ENCODE measurements at regions of chr11 and their contacts with region 1.

Region 1: DNA sequence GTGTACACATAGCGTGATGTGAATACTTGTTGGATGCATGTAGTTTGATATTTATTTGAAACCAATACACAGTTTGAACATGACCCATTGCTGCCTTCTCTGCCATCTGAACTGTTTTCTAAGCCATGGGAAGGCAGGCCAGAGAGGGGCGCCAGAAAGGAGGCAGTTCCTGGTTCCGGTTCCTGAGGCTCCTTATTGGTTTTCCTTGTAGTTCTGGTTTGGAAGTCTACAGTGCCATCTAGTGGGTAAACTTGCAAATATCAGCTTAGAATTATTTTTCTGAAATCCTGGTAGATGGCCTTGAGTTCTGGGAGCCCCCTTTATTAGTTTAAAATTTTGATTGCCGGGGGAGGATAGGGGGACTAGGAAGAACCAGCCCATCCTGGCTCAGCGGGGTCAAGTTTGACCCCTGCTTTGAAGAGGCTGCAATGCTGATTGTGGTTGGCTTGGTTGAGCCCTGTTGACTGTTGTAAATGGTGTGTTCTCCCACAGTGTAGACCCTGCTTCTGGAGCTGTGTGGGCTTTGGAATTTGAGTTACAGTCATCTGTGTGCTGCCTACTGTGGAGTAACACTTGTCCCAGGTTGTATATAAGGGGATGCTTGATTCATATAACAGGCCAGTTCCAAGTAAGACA is 48.4 kb downstream of the GRAMD1B start:
- DNase-seq: peak in 1 of 2 donors; percentile 22
- H3K4me3 ChIP-seq: no peak overlapping the region
- CTCF ChIP-seq: peak in 1 of 3 donors; percentile 25
- POLR2A ChIP-seq: no peak

Region 2: DNA sequence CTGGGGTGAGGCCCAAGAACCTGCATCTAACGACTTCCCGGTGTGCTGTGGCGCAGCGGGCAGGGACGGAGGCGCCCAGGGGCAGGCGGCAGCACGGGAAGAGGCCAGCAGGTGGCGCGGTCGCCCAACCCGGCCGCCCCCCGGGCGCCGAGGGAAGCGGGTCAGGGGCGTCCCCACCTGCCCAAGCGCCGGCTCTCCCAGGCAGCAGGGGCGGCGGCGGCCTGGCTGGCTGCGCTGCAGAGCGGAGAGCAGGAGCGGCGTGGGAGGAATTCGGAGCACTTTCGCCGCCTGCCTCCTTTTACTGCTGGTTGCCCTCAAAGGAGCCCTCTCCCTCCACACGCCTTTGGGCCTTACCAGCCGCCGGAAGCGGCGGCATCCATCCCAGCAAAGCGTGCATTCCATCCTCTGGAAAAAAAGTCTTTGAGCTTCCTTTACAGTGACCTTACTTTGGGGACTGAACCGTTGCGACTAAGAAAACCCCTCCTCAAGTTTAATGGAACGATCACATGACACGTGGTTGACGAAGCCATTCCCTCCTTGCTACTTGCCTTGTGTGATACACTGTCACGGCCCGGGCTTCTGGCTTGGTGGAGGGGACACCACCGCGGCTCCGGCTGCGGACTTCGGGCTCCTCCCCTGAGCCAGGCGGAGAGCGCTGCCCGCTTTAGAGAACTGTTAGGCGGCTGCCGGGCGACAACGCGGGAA is 176.6 kb before region 1 on chr11:
- intact Hi-C with region 1: loop called (anchors 10 kb)
- DNase-seq: peak; percentile 18 to 87
- H3K4me3 ChIP-seq: no peak overlapping the region
- CTCF ChIP-seq: no peak
- POLR2A ChIP-seq: no peak

Region 3: DNA sequence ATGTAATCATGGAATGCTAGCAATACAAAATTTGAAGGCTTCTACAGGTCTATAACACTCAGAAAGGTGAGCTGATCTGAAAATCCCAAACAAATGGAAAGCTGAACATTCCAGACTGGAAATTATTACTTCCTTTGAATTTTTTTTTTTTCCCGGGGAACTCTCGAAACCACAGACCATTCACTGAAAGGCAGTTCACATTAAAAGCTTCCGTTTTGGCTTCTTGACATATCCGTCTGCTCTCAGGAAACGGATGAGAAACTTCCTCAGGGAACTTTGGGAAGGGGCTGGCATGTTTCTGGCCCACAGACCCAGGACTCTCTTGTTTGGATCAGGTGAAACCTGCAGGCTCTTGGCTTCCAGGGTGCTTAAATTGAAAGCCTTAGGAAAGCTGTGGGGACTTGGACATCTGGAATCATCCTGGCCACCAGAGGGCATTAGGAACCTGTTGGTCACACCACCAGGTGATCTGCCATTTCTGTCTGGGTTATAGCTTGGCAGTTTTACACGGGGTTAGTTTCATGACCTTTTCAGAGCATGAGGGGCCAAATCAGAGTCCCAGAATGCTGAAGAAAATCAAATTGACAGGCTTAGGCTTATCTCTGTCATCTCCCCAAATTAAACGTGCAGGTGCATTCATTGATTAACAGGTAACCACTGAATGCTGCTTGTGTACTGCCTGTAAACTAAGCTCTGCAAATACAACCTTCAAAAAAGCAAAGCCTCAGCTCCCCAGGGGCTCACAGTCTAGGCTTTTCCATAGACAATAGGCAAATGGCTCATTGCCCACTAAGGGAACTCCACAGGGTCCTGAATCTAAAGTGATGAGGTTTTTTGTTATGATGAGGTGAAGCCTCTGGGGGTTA is 71.1 kb before region 1 on chr11:
- intact Hi-C with region 1: loop called (anchors 5 kb)
- DNase-seq: peak in 1 of 2 donors; percentile 33
- H3K4me3 ChIP-seq: no peak overlapping the region
- CTCF ChIP-seq: no peak
- POLR2A ChIP-seq: no peak

Measured in lower leg skin (tissue), 4 donors.